ENCODE measurements at regions of chr17 and their contacts with region 1.

Region 1: DNA sequence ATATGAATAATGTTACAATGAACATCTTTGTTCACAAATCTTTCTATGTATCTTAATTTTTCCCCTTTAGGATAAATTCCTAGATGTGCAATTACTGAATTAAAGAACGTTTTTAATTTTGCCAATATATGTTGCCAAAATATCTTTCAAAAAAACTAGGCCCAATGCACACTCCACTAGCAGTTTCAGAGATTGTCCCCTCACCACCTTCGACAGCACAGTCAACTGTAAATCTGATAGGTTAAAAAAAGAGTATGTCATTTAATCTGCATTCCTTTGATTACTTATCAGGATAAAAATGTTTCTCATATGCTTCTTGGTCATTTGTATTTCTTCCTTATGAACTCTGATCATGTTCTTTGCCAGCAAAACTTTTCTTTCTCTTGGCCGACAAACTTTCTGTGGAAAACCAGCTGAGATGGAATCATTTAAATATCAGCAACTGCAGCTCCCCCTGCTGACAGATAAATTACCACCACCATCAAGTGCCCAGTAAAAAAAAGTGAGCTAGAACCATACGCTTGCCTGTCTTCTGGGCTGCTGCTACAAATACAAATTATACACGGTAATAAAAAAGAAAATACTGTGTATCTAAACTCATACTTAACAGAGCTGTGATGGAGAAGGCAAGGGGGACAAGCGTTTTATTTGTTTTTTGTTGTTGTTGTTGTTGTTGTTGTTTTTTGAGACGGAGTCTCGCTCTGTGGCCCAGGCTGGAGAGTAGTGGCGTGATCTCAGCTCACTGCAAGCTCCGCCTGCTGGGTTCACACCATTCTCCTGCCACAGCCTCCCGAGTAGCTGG is 19.6 kb upstream of the KANSL1 start:
- DNase-seq: peak in 1 of 3 donors; percentile 95
- ATAC-seq: peak; percentile 88
- H3K4me3 ChIP-seq: no peak overlapping the region
- H3K4me1 ChIP-seq: no peaks in the 10 kb centered on the region
- CTCF ChIP-seq: peak; percentile 55

Region 2: DNA sequence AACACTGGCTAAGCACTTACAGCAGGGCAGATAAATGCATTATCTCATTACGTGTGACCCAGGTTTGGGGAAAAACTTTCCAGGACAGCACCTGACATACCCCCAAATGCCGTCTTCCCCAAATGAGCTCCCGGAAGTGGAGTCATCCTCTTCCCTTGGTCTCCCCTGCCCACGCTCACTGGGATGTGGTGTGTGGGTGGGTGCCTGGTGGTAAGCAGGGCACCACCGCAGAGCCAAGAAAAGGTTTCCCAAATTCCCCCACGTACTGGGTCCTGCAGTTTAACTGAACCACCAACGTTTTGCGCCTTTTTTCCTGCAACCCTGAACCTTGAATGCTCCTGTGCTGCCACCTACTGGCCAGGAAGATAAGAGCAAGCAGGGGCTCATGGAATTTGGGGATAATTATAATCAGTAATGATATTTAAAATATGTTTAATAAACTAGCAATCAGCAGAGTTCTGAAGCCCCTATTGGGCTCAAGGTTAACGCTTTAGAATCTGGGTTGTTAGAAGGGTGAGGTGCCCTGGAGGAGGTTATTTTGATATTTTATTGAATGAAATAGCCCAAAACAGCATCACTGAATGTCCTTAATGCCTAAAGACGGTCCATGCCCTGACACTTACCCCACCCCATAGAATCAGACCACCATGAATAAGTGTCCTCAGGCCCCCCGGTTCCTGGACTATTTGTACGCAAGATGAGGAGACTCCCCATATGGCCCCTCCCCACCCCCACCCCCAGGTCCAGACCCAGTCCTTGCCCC is 360.1 kb before region 1 on chr17:
- intact Hi-C with region 1: no loop called
- DNase-seq: peak in 2 of 3 donors; percentile 56 to 79
- ATAC-seq: peak; percentile 52
- H3K4me3 ChIP-seq: no peak overlapping the region
- H3K4me1 ChIP-seq: no peaks in the 10 kb centered on the region
- CTCF ChIP-seq: peak; percentile 84

Region 3: GRCh38 chr17:46002311-46002972 is 210.4 kb before region 1 on chr17:
- intact Hi-C with region 1: loop called in 1 of 2 experiments (anchors 10 kb)
- DNase-seq: peak in 2 of 3 donors; percentile 63 to 89
- ATAC-seq: peak; percentile 94
- H3K4me3 ChIP-seq: no peak overlapping the region
- H3K4me1 ChIP-seq: peaks cover 10% of the 10 kb centered on the region
- CTCF ChIP-seq: peak; percentile 93

Region 4: GRCh38 chr17:46044286-46044928 is 168.4 kb before region 1 on chr17:
- intact Hi-C with region 1: loop called in 1 of 2 experiments (anchors 5 kb)
- DNase-seq: peak in 2 of 3 donors; percentile 49 to 95
- ATAC-seq: peak; percentile 89
- H3K4me3 ChIP-seq: no peak overlapping the region
- H3K4me1 ChIP-seq: peaks cover 28% of the 10 kb centered on the region
- CTCF ChIP-seq: peak; percentile 40